Lower leg skin (tissue), 4 donors: ENCODE measurements at regions of chr3 and their contacts with region 1.

Region 1: GRCh38 chr3:13091898-13092611 is 18.8 kb upstream of the IQSEC1 start:
- DNase-seq: peak; percentile 86 to 97
- H3K4me3 ChIP-seq: no peak overlapping the region
- CTCF ChIP-seq: peak in 1 of 3 donors; percentile 53
- POLR2A ChIP-seq: no peak

Region 2: DNA sequence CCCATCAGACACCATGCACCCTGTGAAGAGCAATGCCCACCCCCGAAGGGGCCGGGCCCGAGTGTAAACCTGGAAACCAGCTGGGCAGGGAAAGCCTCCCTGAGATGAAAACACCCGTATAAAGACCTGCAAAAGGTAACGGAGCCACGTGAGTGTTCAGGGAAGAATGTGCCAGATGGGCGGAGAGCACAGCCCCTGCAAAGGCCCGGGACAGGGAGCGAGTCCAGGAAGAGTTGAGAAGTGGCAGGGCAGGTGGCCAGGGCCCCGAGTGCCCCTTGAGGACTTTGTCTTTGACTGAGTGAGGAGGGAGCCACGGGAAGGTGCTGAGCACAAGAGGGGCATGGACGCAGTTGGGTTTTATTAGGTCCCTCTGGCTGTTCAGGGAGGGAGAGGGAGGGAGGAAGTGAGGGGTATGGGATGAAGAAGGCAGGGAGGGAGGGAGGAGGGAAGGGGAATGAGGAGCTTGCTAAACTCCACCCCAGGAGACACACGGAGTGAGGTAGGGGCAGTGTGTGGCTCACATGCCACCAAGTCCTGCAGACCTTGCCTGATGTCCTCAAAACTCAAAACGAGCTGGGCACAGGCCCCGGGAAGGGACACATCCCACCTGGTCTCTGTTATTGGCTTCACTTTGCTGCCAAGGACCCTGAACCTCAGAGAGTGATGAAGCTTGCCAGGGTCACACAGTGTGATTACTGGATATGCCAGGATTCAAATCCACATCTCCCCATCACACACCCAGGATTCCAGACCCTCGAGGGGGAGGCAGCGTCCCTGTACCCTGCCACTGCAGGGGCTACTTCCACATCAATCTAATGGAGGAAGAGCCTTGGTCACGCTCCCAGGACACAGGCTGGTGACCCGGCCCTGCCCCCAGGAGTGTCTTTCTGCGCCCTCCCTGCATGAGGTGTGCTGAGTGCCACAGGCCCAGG is 30.3 kb after region 1 on chr3:
- intact Hi-C with region 1: no loop called
- DNase-seq: no peak
- H3K4me3 ChIP-seq: no peak overlapping the region
- CTCF ChIP-seq: no peak
- POLR2A ChIP-seq: no peak

Region 3: DNA sequence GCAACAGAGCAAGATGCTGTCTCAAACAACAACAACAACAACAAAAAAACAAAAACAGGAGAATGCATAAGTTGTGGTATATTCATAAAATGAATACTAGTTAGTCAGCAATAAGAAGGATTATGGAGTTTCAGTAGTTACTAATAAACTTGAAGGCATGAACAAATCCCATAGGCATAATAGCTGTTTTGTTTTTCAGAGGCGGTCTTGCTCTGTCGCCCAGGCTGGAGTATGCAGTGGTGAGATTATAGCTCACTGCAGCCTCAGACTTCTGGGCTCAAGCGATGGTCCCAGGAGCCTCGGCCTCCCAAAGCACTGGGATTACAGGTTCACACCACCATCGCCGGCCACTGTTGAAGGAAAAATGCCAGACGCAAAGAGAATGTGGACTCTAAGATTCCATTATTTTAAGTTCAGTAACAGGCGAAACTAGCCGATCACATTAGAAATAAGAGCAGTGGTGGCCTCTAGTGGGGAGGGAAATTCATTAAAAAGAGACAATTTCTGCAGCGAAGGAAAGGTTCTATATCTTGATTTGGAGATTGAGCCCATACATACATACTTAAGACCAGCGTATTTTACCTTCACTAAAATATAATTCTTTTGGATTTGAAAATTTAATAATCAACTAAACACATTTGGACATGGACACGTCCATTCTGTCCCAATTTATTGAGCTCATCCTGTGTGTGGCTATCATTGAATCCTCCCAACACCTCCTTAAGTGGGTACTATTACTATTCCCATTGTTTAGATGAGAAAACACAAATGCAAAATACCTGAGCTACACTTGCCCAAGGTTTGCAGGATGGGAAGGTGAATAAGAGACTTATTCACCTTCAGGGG is 360.7 kb after region 1 on chr3:
- intact Hi-C with region 1: loop called (anchors 10 kb)
- DNase-seq: no peak
- H3K4me3 ChIP-seq: no peak overlapping the region
- CTCF ChIP-seq: peak in 1 of 3 donors; percentile 10
- POLR2A ChIP-seq: no peak

Region 4: GRCh38 chr3:13495921-13496723 is 404.1 kb after region 1 on chr3:
- intact Hi-C with region 1: loop called (anchors 5 kb)
- DNase-seq: peak; percentile 84 to 96
- H3K4me3 ChIP-seq: no peak overlapping the region
- CTCF ChIP-seq: peak in 2 of 3 donors; percentile 77 to 79
- POLR2A ChIP-seq: no peak

Region 5: DNA sequence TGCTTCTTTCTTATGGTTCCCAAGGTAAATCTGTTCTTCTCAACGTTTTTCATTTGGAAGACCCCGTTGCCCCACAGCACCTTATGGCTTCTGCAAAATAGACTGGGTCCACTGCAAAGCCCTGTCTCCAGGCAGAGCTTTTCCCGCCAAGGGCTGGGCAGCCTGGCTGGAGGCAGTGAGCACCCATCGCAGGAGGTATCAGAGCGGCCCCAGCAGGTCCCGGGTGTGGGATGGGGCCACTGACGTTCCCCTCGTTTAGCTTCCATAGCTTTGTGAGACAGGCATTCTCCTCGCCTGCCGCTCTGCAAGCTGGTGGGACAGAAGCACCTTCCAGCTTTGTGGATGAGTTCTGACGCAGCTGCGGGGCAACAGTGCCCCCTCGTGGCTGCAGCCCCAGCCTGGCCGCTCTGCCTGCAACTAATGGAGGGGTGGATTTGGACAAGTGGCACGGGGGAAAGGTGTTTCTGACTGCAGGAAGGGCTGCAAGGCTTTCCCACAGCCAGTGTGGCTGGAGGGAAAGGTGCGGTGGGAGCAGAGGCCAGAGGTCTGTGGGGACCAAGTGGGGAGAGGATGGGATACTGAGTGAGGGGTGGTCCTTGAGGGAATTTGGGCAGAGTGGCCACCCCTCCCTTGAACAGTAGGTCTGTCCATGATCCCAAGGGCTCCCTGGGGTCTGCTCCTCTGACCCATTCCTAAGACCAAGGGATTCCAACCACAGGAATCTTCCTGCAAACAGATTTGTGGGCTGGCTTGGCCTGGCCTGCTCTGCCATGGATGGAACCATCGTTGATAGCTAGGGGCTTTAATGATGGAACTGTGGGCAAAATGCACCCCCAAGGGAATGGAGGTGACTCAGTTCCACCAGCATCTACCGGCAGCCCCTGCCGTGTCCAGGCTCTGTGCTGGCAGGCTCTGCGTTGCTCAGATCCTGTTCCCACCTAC is 556.3 kb after region 1 on chr3:
- intact Hi-C with region 1: loop called (anchors 5 kb)
- DNase-seq: peak; percentile 79 to 97
- H3K4me3 ChIP-seq: no peak overlapping the region
- CTCF ChIP-seq: peak in 2 of 3 donors; percentile 4 to 82
- POLR2A ChIP-seq: no peak

Region 6: GRCh38 chr3:13884851-13885703 is 793.0 kb after region 1 on chr3:
- intact Hi-C with region 1: loop called (anchors 10 kb)
- DNase-seq: peak in 1 of 2 donors; percentile 80
- H3K4me3 ChIP-seq: no peak overlapping the region
- CTCF ChIP-seq: no peak
- POLR2A ChIP-seq: no peak